A549 (cell line): ENCODE measurements at regions of chr7 and their contacts with region 1.

Region 1: GRCh38 chr7:90155206-90155605 is 937 bp downstream of the STEAP1 start:
- DNase-seq: no peak
- ATAC-seq: no peak
- H3K4me3 ChIP-seq: peak overlapping the region; percentile 53
- H3K27ac ChIP-seq: peak overlapping the region; percentile 79 to 94; a peak in 3 of 6 replicates
- H3K4me1 ChIP-seq: peaks cover 5% of the 10 kb centered on the region; the same call in 1 of the 3 replicates
- CTCF ChIP-seq: no peak
- EP300 ChIP-seq: no peak
- POLR2A ChIP-seq: no peak
- RAD21 ChIP-seq: no peak

Region 2: GRCh38 chr7:90165724-90166123 is 10.5 kb after region 1 on chr7:
- CTCF ChIA-PET with region 1: interaction called, 11 read pairs
- POLR2A ChIA-PET with region 1: no interaction called
- DNase-seq: no peak
- ATAC-seq: no peak
- H3K4me3 ChIP-seq: no peak overlapping the region
- H3K27ac ChIP-seq: no peak overlapping the region
- H3K4me1 ChIP-seq: no peaks in the 10 kb centered on the region
- CTCF ChIP-seq: no peak
- EP300 ChIP-seq: no peak
- POLR2A ChIP-seq: no peak
- RAD21 ChIP-seq: no peak

Region 3: DNA sequence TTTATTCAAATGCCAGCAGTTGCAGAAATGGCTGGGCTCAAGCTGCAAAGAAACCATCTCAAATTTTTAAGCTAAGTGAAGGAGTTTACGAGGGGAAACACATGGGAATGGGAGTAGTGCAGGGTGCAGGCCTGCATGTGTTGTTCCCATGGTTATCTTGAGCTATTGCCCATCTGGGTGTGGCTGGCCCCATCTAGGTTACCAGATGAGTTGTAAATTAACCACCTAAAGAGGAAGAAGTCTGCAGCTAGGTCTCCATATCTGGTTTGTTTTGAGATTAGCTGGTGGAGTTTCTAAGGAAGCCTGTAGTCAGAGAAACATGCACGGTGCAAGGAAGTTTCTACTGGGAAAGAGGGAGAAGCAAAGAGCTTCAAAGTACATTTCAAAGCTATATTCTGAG is 33.1 kb after region 1 on chr7:
- CTCF ChIA-PET with region 1: interaction called, 11 read pairs
- POLR2A ChIA-PET with region 1: no interaction called
- DNase-seq: peak in 1 of 2 experiments; percentile 59
- ATAC-seq: peak in 1 of 2 experiments; percentile 68; a peak in 4 of 6 replicates
- H3K4me3 ChIP-seq: no peak overlapping the region
- H3K27ac ChIP-seq: peak overlapping the region; percentile 19 to 40; a peak in 5 of 6 replicates
- H3K4me1 ChIP-seq: peaks cover 18% of the 10 kb centered on the region; the same call in 1 of the 3 replicates
- CTCF ChIP-seq: no peak
- EP300 ChIP-seq: no peak
- POLR2A ChIP-seq: no peak
- RAD21 ChIP-seq: no peak

Region 4: GRCh38 chr7:90262438-90262837 is 107.2 kb after region 1 on chr7:
- CTCF ChIA-PET with region 1: interaction called, 28 read pairs
- POLR2A ChIA-PET with region 1: no interaction called
- DNase-seq: peak; percentile 37 to 42
- ATAC-seq: peak in 1 of 2 experiments; percentile 84; a peak in 4 of 6 replicates
- H3K4me3 ChIP-seq: no peak overlapping the region
- H3K27ac ChIP-seq: no peak overlapping the region
- H3K4me1 ChIP-seq: no peaks in the 10 kb centered on the region
- CTCF ChIP-seq: peak; percentile 76
- EP300 ChIP-seq: no peak
- POLR2A ChIP-seq: no peak
- RAD21 ChIP-seq: peak; percentile 77 to 84

Region 5: DNA sequence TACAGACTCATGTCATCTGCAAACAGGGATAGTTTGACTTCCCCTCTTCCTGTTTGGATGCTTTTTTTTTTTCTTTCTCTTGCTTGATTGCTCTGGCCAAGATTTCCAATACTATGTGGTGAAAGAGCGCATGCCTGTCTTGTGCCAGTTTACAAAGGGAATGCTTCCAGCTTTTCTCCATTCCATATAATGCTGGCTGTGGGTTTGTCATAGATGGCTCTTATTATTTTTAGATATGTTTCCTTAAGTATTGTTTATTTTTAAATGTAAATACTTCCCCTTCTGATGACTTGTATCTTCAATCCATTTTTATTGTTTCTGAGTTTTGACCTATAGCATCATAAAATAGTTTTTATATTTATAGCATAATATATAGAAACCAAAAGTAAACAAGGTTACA is 148.0 kb after region 1 on chr7:
- CTCF ChIA-PET with region 1: interaction called, 11 read pairs
- POLR2A ChIA-PET with region 1: no interaction called
- DNase-seq: no peak
- ATAC-seq: no peak
- H3K4me3 ChIP-seq: no peak overlapping the region
- H3K27ac ChIP-seq: no peak overlapping the region
- H3K4me1 ChIP-seq: no peaks in the 10 kb centered on the region
- CTCF ChIP-seq: no peak
- EP300 ChIP-seq: no peak
- POLR2A ChIP-seq: no peak
- RAD21 ChIP-seq: no peak